Uterus (tissue), 4 donors: ENCODE measurements at regions of chr3 and their contacts with region 1.

Region 1: DNA sequence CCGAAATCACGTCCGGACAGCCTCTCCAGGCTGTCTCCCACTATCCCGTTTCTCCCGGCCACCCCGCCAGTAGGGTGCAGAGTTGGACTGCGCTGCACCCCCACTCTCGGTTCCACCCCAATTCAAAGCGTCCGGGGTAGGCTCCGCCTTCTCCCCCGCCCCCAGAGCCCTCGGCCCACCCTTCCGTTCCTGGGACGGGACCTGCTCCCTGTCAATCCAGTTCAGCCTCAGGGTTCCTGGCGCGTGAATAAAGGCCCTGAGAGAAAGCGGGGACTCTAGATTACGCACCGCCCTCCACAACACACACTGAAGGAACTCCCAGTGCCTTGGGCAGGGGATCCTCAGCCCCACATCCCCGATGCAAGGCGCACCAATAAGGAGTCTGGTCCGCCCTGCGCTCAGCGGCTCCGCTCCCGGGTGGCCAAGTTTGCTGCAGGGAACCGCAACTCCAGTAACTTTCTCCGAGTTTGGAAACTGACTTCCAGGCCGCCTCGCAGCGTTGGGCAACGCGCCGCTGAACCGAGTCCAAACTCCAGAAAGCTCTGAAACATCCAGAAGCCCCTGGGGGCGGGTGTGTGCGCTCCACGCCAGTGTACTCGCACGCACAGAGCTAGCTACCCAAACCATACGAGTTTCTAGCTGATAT is 1.9 kb downstream of the ADAMTS9 start:
- DNase-seq: peak; percentile 96 to 97
- H3K4me3 ChIP-seq: peak overlapping the region; percentile 68 to 69
- H3K27ac ChIP-seq: peak overlapping the region; percentile 94 to 98
- H3K4me1 ChIP-seq: peaks cover 0 to 5% of the 10 kb centered on the region in 2 donors
- H3K27me3 ChIP-seq: no peaks in the 10 kb centered on the region
- CTCF ChIP-seq: peak; percentile 62 to 79 (median 63)
- POLR2A ChIP-seq: peak; percentile 77 to 83

Region 2: GRCh38 chr3:64575211-64575844 is 110.6 kb before region 1 on chr3:
- intact Hi-C with region 1: loop called (anchors 10 kb)
- DNase-seq: no peak
- H3K4me3 ChIP-seq: no peak overlapping the region
- H3K27ac ChIP-seq: no peak overlapping the region
- H3K4me1 ChIP-seq: no peaks in the 10 kb centered on the region
- H3K27me3 ChIP-seq: no peaks in the 10 kb centered on the region
- CTCF ChIP-seq: peak; percentile 26 to 51 (median 32)
- POLR2A ChIP-seq: no peak

Region 3: DNA sequence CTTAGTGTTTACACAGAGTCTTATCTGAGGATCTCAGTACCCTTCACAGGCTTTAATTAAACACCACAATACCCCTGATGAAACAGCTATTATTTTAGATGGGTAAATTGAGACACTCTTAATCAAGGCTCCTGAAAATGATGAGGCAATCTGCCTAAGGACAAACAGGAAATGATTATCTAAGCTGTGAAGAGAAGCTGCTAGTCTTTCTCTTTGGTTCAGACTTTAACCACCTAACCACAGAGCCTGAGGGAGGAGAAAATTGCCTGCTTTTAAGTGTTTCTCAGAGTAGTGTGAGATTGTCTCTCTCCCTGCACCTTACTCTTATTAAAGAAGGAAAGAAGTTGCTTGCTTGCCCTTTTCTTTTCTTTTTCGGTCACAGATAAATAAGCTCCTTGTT is 366.2 kb after region 1 on chr3:
- intact Hi-C with region 1: no loop called
- DNase-seq: no peak
- H3K4me3 ChIP-seq: no peak overlapping the region
- H3K27ac ChIP-seq: no peak overlapping the region
- H3K4me1 ChIP-seq: no peaks in the 10 kb centered on the region
- H3K27me3 ChIP-seq: no peaks in the 10 kb centered on the region
- CTCF ChIP-seq: no peak
- POLR2A ChIP-seq: no peak